ENCODE measurements at regions of chr1 and their contacts with region 1.

Region 1: DNA sequence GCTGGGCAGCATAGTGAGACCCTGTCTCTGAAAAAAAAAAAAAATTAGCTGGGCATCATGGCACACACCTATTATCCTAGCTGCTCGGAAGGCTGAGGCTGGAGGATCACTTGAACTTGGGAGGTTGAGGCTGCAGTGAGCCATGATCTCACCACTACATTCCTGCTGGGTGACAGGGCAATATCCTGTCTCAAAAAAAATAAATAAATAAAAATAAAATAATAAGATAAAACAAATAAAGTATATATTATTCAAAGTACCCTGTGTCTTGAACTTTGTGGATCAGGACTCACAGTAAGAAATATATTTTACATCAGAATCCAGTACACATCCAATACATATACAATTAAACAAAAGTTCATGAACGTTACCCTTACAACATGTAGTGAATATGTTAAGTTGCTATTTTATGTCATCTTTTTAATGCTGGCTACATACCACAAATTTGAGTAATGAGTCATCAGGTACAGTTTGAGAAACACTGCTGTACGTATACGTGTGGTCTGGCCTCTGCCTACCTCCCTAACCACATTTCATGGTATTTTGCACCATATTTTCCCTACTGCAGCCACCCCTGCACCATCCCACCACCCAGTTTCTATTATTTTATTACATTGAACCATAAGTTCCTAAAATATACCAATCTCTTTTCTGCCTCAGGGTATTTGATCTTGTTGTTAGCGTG is 4.4 kb downstream of the NME7 start:
- DNase-seq: peak; percentile 70
- ATAC-seq: peak; percentile 28
- H3K4me3 Mint-ChIP-seq: peak overlapping the region; percentile 30
- H3K27ac Mint-ChIP-seq: peak overlapping the region; percentile 84
- H3K4me1 Mint-ChIP-seq: peaks cover 22% of the 10 kb centered on the region
- H3K27me3 Mint-ChIP-seq: no peaks in the 10 kb centered on the region

Region 2: DNA sequence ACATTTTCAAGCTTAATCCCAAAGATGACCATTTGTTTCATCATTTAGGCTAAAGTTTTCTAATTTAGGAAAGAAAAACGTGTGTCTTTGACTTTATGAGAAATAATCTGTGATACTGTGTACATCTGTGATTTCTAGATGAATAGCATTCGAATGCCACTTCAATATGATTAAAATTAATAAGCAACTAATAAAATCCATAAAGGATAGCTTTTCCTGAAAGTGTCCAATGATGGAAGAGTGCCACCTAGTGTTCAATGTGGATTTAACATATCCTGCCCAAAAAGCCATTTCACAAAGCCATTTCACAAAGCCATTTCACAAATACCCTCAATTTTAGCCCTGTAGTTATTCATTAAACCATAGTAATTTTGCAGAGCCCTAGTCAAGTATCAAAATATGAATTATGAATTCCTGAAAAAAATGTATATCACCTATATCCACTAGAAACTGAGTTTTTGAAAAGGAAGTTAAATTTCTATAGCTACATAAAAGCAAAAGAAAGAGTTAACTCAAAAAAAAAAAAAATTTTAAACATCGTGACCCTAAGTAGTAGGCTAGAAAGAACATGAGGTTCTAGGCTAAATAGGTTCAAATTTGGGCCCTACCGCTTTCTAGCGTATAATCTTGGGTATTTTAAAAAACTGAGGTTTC is 14.7 kb before region 1 on chr1:
- CTCF ChIA-PET with region 1: interaction called, 13 read pairs
- DNase-seq: no peak
- ATAC-seq: no peak
- H3K4me3 Mint-ChIP-seq: no peak overlapping the region
- H3K27ac Mint-ChIP-seq: no peak overlapping the region
- H3K4me1 Mint-ChIP-seq: peaks cover 17% of the 10 kb centered on the region
- H3K27me3 Mint-ChIP-seq: no peaks in the 10 kb centered on the region

Measured in activated CD8-positive, alpha-beta memory T cell treated with anti-CD3 and anti-CD28 coated beads, Interleukin-2, amount 10 ng/mL, durations not matched to agents 7 days and 5 days (primary cell).